ENCODE measurements at regions of chr4 and their contacts with region 1.

Region 1: GRCh38 chr4:47926639-47927258 is 12.4 kb upstream of the NFXL1 start:
- DNase-seq: peak in 8 of 10 donors; percentile 26 to 73 (median 60)
- H3K4me3 ChIP-seq: peak overlapping the region in 46 of 59 donors; percentile 4 to 58 (median 32)
- H3K27ac ChIP-seq: no peak overlapping the region
- H3K27me3 ChIP-seq: no peaks in the 10 kb centered on the region
- CTCF ChIP-seq: peak in 54 of 56 donors; percentile 40 to 78 (median 64)

Region 2: DNA sequence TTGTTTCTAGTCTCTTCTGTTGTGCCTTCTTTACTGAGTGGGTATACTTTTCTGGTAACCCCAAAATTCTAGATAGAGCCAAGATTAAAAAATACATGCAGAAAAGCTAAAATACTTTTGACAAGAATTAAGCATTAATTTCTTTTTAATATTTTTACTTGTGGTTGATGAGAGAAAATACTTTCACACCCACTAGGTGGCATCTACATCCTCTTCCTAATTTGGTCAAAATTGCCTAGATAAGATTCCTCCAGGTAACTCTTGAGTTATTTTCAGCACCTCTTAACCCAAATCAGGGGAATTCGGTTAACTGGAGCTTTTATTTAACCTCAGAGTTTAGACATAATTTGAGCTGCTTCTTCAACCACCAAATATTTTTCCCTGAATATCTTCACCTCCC is 989.3 kb before region 1 on chr4:
- intact Hi-C with region 1: no loop called
- DNase-seq: no peak
- H3K4me3 ChIP-seq: no peak overlapping the region
- H3K27ac ChIP-seq: no peak overlapping the region
- H3K27me3 ChIP-seq: no peaks in the 10 kb centered on the region
- CTCF ChIP-seq: peak in 47 of 56 donors; percentile 7 to 65 (median 36)

Region 3: GRCh38 chr4:47690611-47691010 is 236.1 kb before region 1 on chr4:
- intact Hi-C with region 1: no loop called
- DNase-seq: no peak
- H3K4me3 ChIP-seq: no peak overlapping the region
- H3K27ac ChIP-seq: no peak overlapping the region
- H3K27me3 ChIP-seq: peaks cover 0 to 3% (median 0%) of the 10 kb centered on the region in 45 donors
- CTCF ChIP-seq: no peak

Region 4: DNA sequence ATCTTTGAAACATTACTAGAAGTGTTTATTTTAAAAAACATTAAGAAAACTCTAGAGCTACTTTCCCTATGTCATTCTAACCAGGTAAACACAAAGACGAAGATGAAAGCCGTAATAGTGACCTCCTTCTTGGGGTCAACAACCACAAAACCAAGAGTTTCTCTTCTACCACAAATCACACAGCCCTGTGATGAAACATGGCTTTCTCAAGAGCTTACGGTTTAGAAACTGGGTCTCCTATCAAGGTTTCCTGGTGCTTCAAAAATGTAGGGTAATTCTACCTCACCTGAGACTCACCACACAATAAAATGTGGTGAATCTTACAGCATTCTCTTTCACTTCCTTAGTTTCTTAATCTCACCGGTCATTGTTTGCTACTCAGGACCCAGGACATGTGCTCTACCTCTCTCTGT is 139.8 kb before region 1 on chr4:
- intact Hi-C with region 1: no loop called
- DNase-seq: no peak
- H3K4me3 ChIP-seq: no peak overlapping the region
- H3K27ac ChIP-seq: no peak overlapping the region
- H3K27me3 ChIP-seq: no peaks in the 10 kb centered on the region
- CTCF ChIP-seq: no peak

Region 5: DNA sequence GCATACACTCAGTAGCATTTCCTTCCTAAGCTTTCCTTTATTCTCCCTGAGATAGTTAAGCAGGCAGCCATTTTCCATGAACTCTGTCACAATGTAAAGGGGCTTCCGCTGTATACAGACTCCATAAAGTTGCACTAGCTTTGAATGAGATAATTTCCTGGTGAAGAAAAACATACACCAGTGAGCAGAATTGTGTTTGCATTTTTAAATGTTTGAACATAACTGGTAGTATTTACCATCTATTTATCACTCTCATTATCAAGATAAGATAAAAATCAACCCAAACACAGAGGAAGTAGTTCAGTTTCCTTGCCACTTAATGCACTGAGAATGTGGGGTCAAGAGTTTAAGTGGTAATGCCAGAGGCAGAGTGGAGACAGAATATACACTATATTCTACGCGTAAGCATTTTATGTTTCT is 153.2 kb after region 1 on chr4:
- intact Hi-C with region 1: loop called in 1 of 2 experiments (anchors 10 kb)
- DNase-seq: no peak
- H3K4me3 ChIP-seq: no peak overlapping the region
- H3K27ac ChIP-seq: no peak overlapping the region
- H3K27me3 ChIP-seq: peaks cover 0 to 13% (median 0%) of the 10 kb centered on the region in 45 donors
- CTCF ChIP-seq: no peak